Activated CD8-positive, alpha-beta T cell treated with anti-CD3 and anti-CD28 coated beads for 36 hours (primary cell): ENCODE measurements at regions of chr7 and their contacts with region 1.

Region 1: GRCh38 chr7:135645296-135645904 is 16.9 kb upstream of the STMP1 start:
- DNase-seq: peak; percentile 24
- ATAC-seq: peak; percentile 80
- H3K4me3 Mint-ChIP-seq: no peak overlapping the region
- H3K27ac Mint-ChIP-seq: no peak overlapping the region
- H3K4me1 Mint-ChIP-seq: no peaks in the 10 kb centered on the region
- H3K27me3 Mint-ChIP-seq: no peaks in the 10 kb centered on the region
- CTCF ChIP-seq: peak; percentile 77

Region 2: GRCh38 chr7:135281363-135281949 is 363.9 kb before region 1 on chr7:
- CTCF ChIA-PET with region 1: interaction called, 38 read pairs
- POLR2A ChIA-PET with region 1: no interaction called
- intact Hi-C with region 1: loop called (anchors 1 kb)
- DNase-seq: peak; percentile 92
- ATAC-seq: peak; percentile 100
- H3K4me3 Mint-ChIP-seq: no peak overlapping the region
- H3K27ac Mint-ChIP-seq: no peak overlapping the region
- H3K4me1 Mint-ChIP-seq: peaks cover 8% of the 10 kb centered on the region
- H3K27me3 Mint-ChIP-seq: peaks cover 5% of the 10 kb centered on the region
- CTCF ChIP-seq: peak; percentile 95

Region 3: DNA sequence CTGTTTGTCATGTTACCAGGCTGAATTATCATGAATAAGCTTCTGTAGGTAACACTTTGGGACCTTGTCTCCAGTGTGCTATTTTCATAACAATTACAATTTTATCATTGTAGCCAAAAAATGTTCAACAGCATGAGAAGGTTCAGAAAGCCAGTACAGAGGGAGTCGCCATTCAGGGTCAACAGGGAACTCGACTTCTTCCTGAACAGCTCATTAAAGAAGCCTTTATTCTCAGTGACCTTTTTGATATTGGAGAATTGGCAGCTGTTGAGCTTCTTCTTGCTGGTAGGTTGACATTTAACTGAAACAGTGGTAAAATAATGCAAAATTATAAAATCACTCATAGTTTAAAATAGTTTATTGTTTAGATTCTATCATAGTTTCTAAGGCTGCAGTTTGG is 71.9 kb before region 1 on chr7:
- CTCF ChIA-PET with region 1: interaction called, 14 read pairs
- POLR2A ChIA-PET with region 1: no interaction called
- intact Hi-C with region 1: no loop called
- DNase-seq: no peak
- ATAC-seq: no peak
- H3K4me3 Mint-ChIP-seq: no peak overlapping the region
- H3K27ac Mint-ChIP-seq: no peak overlapping the region
- H3K4me1 Mint-ChIP-seq: peaks cover 11% of the 10 kb centered on the region
- H3K27me3 Mint-ChIP-seq: no peaks in the 10 kb centered on the region
- CTCF ChIP-seq: no peak

Region 4: DNA sequence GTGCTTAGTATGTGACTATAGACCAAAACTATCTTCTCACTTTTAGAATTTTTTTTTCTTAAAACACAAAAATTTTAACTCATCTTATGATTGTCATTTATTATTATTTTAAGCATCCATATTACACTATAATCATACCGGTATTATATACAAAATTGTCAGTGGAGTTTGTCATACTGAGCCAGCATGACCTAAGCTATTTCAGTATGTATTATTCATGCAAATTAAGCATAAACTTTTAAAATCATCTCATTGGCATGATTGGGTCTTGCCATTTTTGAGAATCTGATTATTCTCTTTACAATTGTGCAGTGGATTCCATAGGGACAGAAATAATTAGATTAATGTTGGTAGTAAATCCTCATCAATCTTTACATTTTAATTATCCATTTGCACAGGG is 29.3 kb before region 1 on chr7:
- CTCF ChIA-PET with region 1: interaction called, 15 read pairs
- POLR2A ChIA-PET with region 1: no interaction called
- intact Hi-C with region 1: no loop called
- DNase-seq: no peak
- ATAC-seq: no peak
- H3K4me3 Mint-ChIP-seq: no peak overlapping the region
- H3K27ac Mint-ChIP-seq: no peak overlapping the region
- H3K4me1 Mint-ChIP-seq: no peaks in the 10 kb centered on the region
- H3K27me3 Mint-ChIP-seq: no peaks in the 10 kb centered on the region
- CTCF ChIP-seq: no peak

Region 5: GRCh38 chr7:135634191-135634878 is 11.1 kb before region 1 on chr7:
- CTCF ChIA-PET with region 1: interaction called, 28 read pairs
- POLR2A ChIA-PET with region 1: no interaction called
- intact Hi-C with region 1: no loop called
- DNase-seq: no peak
- ATAC-seq: no peak
- H3K4me3 Mint-ChIP-seq: no peak overlapping the region
- H3K27ac Mint-ChIP-seq: no peak overlapping the region
- H3K4me1 Mint-ChIP-seq: no peaks in the 10 kb centered on the region
- H3K27me3 Mint-ChIP-seq: no peaks in the 10 kb centered on the region
- CTCF ChIP-seq: no peak